ENCODE measurements at regions of chr10 and their contacts with region 1.

Region 1: GRCh38 chr10:71893920-71894319 is 42.9 kb upstream of the PSAP start:
- DNase-seq: no peak
- ATAC-seq: no peak
- H3K4me3 ChIP-seq: no peak overlapping the region
- H3K4me3 Mint-ChIP-seq: no peak overlapping the region
- H3K27ac ChIP-seq: no peak overlapping the region
- H3K27ac Mint-ChIP-seq: no peak overlapping the region
- H3K4me1 ChIP-seq: peaks cover 16 to 17% of the 10 kb centered on the region in 2 donors
- H3K4me1 Mint-ChIP-seq: peaks cover 20% of the 10 kb centered on the region
- H3K27me3 ChIP-seq: no peaks in the 10 kb centered on the region
- H3K27me3 Mint-ChIP-seq: no peaks in the 10 kb centered on the region
- CTCF ChIP-seq: no peak

Region 2: GRCh38 chr10:71314028-71314693 is 579.8 kb before region 1 on chr10:
- CTCF ChIA-PET with region 1: interaction called, 18 read pairs
- POLR2A ChIA-PET with region 1: no interaction called
- intact Hi-C with region 1: loop called (anchors 1 kb)
- DNase-seq: peak; percentile 76
- ATAC-seq: peak; percentile 32
- H3K4me3 ChIP-seq: no peak overlapping the region
- H3K4me3 Mint-ChIP-seq: no peak overlapping the region
- H3K27ac ChIP-seq: no peak overlapping the region
- H3K27ac Mint-ChIP-seq: no peak overlapping the region
- H3K4me1 ChIP-seq: peaks cover 7 to 20% of the 10 kb centered on the region in 2 donors
- H3K4me1 Mint-ChIP-seq: peaks cover 16% of the 10 kb centered on the region
- H3K27me3 ChIP-seq: peaks cover 0 to 4% (median 0%) of the 10 kb centered on the region in 4 experiments
- H3K27me3 Mint-ChIP-seq: peaks cover 12% of the 10 kb centered on the region
- CTCF ChIP-seq: peak; percentile 97

Region 3: DNA sequence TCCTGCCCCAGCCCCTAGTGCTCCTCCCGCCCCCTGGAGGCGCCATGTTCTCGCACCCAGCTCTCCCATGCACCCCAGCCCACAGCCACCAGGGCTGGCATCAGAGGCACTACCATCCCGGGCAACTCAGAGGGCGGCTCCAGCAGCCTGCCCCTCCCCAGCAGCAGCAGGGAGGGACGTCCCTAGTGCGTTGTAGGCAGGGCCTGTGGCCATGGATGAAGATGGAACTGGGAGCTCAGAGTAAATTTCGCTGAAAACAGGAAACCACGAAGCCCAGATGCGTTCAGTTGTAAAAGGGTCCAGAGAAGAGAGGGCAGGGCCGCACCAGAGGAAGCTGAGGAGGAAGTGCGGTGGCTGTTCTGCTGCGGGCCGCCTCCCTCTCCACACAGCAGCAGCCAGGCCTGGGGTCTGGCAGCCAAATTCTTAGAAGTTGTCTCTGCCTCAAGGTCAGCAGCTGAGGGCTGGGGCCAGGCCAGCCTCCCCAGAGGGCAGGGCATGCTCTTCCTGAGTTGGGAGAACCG is 145.2 kb before region 1 on chr10:
- CTCF ChIA-PET with region 1: interaction called, 11 read pairs
- POLR2A ChIA-PET with region 1: no interaction called
- intact Hi-C with region 1: no loop called
- DNase-seq: peak; percentile 84
- ATAC-seq: peak; percentile 80
- H3K4me3 ChIP-seq: peak overlapping the region in 1 of 5 experiments; percentile 15
- H3K4me3 Mint-ChIP-seq: peak overlapping the region; percentile 84
- H3K27ac ChIP-seq: peak overlapping the region; percentile 72 to 84
- H3K27ac Mint-ChIP-seq: peak overlapping the region; percentile 100
- H3K4me1 ChIP-seq: peaks cover 83 to 92% of the 10 kb centered on the region in 2 donors
- H3K4me1 Mint-ChIP-seq: peaks cover 89% of the 10 kb centered on the region
- H3K27me3 ChIP-seq: no peaks in the 10 kb centered on the region
- H3K27me3 Mint-ChIP-seq: no peaks in the 10 kb centered on the region
- CTCF ChIP-seq: no peak

Region 4: GRCh38 chr10:71822448-71822763 is 71.5 kb before region 1 on chr10:
- CTCF ChIA-PET with region 1: interaction called, 106 read pairs
- POLR2A ChIA-PET with region 1: no interaction called
- intact Hi-C with region 1: no loop called
- DNase-seq: no peak
- ATAC-seq: no peak
- H3K4me3 ChIP-seq: no peak overlapping the region
- H3K4me3 Mint-ChIP-seq: no peak overlapping the region
- H3K27ac ChIP-seq: no peak overlapping the region
- H3K27ac Mint-ChIP-seq: no peak overlapping the region
- H3K4me1 ChIP-seq: no peaks in the 10 kb centered on the region
- H3K4me1 Mint-ChIP-seq: no peaks in the 10 kb centered on the region
- H3K27me3 ChIP-seq: no peaks in the 10 kb centered on the region
- H3K27me3 Mint-ChIP-seq: no peaks in the 10 kb centered on the region
- CTCF ChIP-seq: no peak

Region 5: DNA sequence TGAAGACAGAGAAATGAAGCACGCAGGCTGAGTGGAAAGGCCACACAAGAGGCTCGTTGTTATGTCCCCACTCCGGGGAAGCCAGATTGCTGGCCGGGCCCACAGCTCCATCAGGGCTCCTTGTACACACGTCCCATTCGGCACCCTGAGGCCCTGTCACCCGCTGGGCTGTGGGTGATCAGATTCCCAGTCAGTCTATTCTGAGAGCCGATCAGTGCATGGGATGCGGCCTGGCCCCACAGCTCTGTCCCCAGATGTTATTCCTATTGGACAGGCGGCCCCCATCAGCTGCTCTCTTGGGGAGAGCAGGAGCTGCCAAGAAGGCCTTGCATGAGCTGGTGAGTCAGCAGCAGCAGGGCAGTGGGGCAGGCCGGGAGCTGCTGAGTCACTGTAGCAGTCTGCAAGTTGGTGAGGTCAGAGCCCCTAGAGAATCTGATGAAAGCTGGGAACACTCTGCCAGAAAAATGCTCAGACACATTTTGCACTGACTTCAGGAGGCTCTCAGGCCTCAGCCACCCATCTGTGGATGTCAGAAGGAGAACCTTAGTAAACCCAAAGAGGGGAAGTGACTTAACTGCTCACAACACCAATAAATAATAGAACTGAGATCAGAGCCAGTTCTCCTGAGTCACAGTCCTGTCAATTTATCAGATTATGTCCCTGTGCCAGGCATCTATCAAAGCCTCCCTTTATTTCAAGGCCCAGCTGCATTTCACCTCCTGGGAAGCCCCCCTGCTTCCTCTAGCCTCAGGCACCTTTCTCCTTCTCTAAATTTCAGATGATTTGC is 33.5 kb before region 1 on chr10:
- CTCF ChIA-PET with region 1: interaction called, 30 read pairs
- POLR2A ChIA-PET with region 1: no interaction called
- intact Hi-C with region 1: loop called (anchors 1 kb)
- DNase-seq: peak; percentile 47
- ATAC-seq: peak; percentile 68
- H3K4me3 ChIP-seq: no peak overlapping the region
- H3K4me3 Mint-ChIP-seq: peak overlapping the region; percentile 42
- H3K27ac ChIP-seq: peak overlapping the region in 1 of 2 donors; percentile 23
- H3K27ac Mint-ChIP-seq: peak overlapping the region; percentile 72
- H3K4me1 ChIP-seq: peaks cover 20 to 28% of the 10 kb centered on the region in 2 donors
- H3K4me1 Mint-ChIP-seq: peaks cover 28% of the 10 kb centered on the region
- H3K27me3 ChIP-seq: no peaks in the 10 kb centered on the region
- H3K27me3 Mint-ChIP-seq: no peaks in the 10 kb centered on the region
- CTCF ChIP-seq: no peak

Region 6: DNA sequence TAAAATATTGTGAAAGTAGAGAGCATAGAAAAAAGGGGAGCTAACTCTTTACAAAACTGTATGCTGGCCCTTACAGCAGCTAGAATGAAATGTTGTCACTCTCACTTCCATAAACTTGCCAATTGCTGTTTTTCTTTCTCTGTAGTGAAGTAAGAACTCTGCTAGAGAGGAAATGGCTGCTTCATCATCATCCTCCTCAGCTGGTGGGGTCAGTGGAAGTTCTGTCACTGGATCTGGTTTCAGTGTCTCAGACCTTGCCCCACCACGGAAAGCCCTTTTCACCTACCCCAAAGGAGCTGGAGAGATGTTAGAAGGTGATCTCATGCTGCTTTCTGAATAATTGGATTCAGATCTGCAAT is 329.8 kb after region 1 on chr10:
- CTCF ChIA-PET with region 1: interaction called, 4 read pairs
- POLR2A ChIA-PET with region 1: no interaction called
- intact Hi-C with region 1: loop called (anchors 10 kb)
- DNase-seq: peak; percentile 34
- ATAC-seq: peak; percentile 24
- H3K4me3 ChIP-seq: no peak overlapping the region
- H3K4me3 Mint-ChIP-seq: peak overlapping the region; percentile 44
- H3K27ac ChIP-seq: peak overlapping the region; percentile 42 to 68
- H3K27ac Mint-ChIP-seq: peak overlapping the region; percentile 75
- H3K4me1 ChIP-seq: peaks cover 58 to 70% of the 10 kb centered on the region in 2 donors
- H3K4me1 Mint-ChIP-seq: peaks cover 55% of the 10 kb centered on the region
- H3K27me3 ChIP-seq: no peaks in the 10 kb centered on the region
- H3K27me3 Mint-ChIP-seq: no peaks in the 10 kb centered on the region
- CTCF ChIP-seq: no peak